B cell (primary cell): ENCODE measurements at regions of chr17 and their contacts with region 1.

Region 1: DNA sequence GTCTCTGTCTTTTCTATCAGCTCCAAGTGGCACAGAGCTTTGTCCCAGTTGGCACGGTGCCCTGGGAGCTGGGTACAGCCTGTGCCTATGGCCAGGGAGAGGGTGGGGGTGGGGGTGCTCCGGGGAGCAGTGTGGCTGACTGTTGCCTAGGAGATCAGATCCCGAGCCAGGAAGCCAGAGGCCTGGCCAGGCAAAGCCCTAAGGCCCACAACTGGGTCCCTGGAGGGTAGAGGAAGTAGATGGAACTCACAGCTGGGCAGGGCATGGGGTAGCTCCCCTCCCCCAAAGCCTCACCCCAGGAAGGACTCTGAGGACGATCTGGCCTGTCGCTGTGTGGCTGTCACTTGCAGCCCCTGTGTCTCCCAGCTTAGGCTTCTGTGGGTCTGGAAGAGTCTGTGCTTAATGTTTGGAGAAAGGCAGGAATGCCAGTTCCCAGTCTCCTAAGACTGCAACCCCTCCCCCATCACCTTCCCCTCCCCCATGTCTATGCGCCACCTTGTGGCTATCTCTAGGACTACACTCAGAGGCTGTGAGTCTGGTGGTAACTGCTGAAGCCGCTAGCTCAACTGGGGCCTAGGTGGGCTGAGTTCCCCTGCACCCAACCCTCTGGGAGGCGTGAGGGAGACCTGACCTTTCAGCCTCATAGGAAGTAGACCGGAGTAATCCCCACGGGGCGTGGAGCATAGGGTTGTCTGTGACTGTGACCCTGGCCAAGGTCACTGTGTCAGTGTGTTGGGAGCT is 12.6 kb downstream of the THRA start:
- DNase-seq: peak; percentile 82
- ATAC-seq: peak; percentile 93
- H3K4me3 ChIP-seq: no peak overlapping the region
- H3K4me3 Mint-ChIP-seq: no peak overlapping the region
- H3K27ac ChIP-seq: no peak overlapping the region
- H3K27ac Mint-ChIP-seq: peak overlapping the region; percentile 46
- H3K4me1 ChIP-seq: peaks cover 28 to 31% of the 10 kb centered on the region in 2 donors
- H3K4me1 Mint-ChIP-seq: peaks cover 40% of the 10 kb centered on the region
- H3K27me3 ChIP-seq: no peaks in the 10 kb centered on the region
- H3K27me3 Mint-ChIP-seq: no peaks in the 10 kb centered on the region
- CTCF ChIP-seq: peak; percentile 88

Region 2: DNA sequence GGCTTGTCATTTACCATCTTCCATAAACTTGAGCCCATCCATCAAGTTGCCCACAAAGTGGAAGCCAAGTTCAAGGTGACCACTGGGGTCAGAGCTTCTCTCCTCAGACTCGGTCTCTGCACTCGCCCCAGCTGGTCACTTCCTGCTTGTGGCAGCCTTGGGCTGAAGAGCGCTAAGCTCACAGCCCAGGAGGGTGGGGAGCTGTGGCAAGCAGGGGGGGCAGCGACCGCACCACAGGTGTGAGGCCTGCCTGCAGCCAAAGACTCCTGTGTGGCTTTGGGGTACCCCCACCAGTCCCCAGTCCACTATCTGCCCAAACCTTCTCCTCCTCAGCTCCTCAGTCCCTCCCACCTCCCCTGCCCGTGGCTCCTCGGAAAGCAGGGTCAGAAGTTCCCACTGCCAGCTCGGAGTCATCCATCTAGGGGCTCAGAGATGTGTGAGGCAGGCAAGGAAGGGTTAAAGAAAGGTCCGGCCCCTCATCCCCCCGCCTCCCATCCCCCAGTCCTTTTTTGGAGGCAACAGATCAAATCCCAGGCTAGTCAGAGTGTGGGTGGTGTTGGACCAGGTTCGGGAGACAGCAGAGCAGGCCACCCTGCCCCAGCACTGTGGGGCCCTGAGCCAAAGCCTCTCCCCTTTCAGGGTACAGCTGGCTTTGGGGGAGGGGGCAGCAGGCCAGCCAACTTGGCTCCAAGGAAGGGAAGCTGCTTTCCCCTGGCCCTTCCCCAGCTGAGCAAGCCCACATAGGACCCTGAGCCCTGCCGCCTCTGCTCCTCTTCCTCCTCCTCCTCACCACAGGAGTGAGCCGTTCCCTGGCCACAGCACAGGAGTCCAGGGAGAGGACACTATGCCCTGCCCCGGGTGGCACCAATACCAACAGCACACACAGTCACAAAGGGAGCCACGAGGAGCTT is 56.9 kb before region 1 on chr17:
- CTCF ChIA-PET with region 1: interaction called, 14 read pairs
- POLR2A ChIA-PET with region 1: no interaction called
- intact Hi-C with region 1: no loop called
- DNase-seq: no peak
- ATAC-seq: no peak
- H3K4me3 ChIP-seq: no peak overlapping the region
- H3K4me3 Mint-ChIP-seq: no peak overlapping the region
- H3K27ac ChIP-seq: no peak overlapping the region
- H3K27ac Mint-ChIP-seq: no peak overlapping the region
- H3K4me1 ChIP-seq: peaks cover 0 to 3% of the 10 kb centered on the region in 2 donors
- H3K4me1 Mint-ChIP-seq: no peaks in the 10 kb centered on the region
- H3K27me3 ChIP-seq: no peaks in the 10 kb centered on the region
- H3K27me3 Mint-ChIP-seq: no peaks in the 10 kb centered on the region
- CTCF ChIP-seq: no peak

Region 3: GRCh38 chr17:40062329-40063186 is 12.8 kb before region 1 on chr17 and contains the start of gene THRA:
- CTCF ChIA-PET with region 1: interaction called, 115 read pairs
- POLR2A ChIA-PET with region 1: interaction called, 11 read pairs
- intact Hi-C with region 1: loop called (anchors 1 kb)
- DNase-seq: peak; percentile 85
- ATAC-seq: peak; percentile 92
- H3K4me3 ChIP-seq: peak within 1 kb of the TSS; percentile 53 to 96 (median 95)
- H3K4me3 Mint-ChIP-seq: peak within 1 kb of the TSS; percentile 91
- H3K27ac ChIP-seq: peak within 1 kb of the TSS; percentile 59 to 67
- H3K27ac Mint-ChIP-seq: peak within 1 kb of the TSS; percentile 93
- H3K4me1 ChIP-seq: peaks cover 17 to 23% of the 10 kb centered on the region in 2 donors
- H3K4me1 Mint-ChIP-seq: peaks cover 39% of the 10 kb centered on the region
- H3K27me3 ChIP-seq: peaks cover 0 to 6% (median 1%) of the 10 kb centered on the region in 4 experiments
- H3K27me3 Mint-ChIP-seq: peaks cover 6% of the 10 kb centered on the region
- CTCF ChIP-seq: no peak
- total RNA-seq, gene THRA: 16.8 and 17.1 TPM in 2 replicates

Region 4: DNA sequence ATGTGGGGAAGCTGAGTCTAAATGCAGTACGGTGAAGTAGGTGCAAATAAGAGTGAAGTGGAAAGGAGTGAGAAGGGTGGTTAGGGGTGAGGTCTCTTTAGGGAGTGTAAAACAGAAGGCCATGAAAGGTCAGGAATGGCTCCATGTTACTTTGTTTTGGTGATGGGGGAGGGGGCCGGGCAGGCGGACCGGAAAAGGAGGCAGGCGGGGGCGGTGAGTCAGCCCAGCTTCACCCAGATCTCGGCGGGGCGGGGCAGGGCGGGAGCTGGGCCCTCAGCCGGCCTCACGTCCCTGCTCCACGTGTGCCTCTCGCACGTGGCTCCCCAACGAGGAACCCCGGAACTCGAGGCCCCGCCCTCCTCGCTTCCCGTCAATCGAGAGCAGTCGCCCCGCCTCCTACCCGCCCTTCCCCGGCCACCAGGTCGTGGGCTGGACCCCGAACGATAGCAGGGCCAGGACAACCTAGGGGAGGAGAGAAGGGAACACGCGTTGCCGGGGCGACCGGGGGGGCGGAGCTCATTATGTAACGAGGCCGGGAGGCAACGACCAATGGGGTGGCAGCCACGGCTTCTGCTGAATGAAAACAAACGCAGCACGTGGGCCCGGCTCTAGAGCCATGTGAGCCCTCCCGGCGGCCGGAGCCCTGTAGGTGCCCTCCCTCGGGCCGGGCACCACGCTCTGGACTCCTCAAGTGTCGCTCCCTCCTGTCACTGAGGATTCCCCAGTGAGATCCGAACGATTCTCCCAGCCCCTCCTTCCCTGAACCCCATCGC is 23.7 kb after region 1 on chr17:
- CTCF ChIA-PET with region 1: interaction called, 37 read pairs
- POLR2A ChIA-PET with region 1: interaction called, 4 read pairs
- intact Hi-C with region 1: loop called (anchors 1 kb)
- DNase-seq: peak; percentile 98
- ATAC-seq: peak; percentile 64
- H3K4me3 ChIP-seq: peak overlapping the region; percentile 51 to 91 (median 78)
- H3K4me3 Mint-ChIP-seq: peak overlapping the region; percentile 77
- H3K27ac ChIP-seq: peak overlapping the region; percentile 92 to 93
- H3K27ac Mint-ChIP-seq: peak overlapping the region; percentile 89
- H3K4me1 ChIP-seq: peaks cover 53 to 70% of the 10 kb centered on the region in 2 donors
- H3K4me1 Mint-ChIP-seq: peaks cover 74% of the 10 kb centered on the region
- H3K27me3 ChIP-seq: no peaks in the 10 kb centered on the region
- H3K27me3 Mint-ChIP-seq: no peaks in the 10 kb centered on the region
- CTCF ChIP-seq: no peak

Region 5: GRCh38 chr17:40139566-40140058 is 64.2 kb after region 1 on chr17:
- CTCF ChIA-PET with region 1: interaction called, 12 read pairs
- POLR2A ChIA-PET with region 1: interaction called, 11 read pairs
- intact Hi-C with region 1: no loop called
- DNase-seq: no peak
- ATAC-seq: peak; percentile 1
- H3K4me3 ChIP-seq: peak overlapping the region; percentile 74 to 93 (median 84)
- H3K4me3 Mint-ChIP-seq: peak overlapping the region; percentile 94
- H3K27ac ChIP-seq: peak overlapping the region; percentile 94 to 95
- H3K27ac Mint-ChIP-seq: peak overlapping the region; percentile 98
- H3K4me1 ChIP-seq: peaks cover 19 to 24% of the 10 kb centered on the region in 2 donors
- H3K4me1 Mint-ChIP-seq: peaks cover 23% of the 10 kb centered on the region
- H3K27me3 ChIP-seq: no peaks in the 10 kb centered on the region
- H3K27me3 Mint-ChIP-seq: no peaks in the 10 kb centered on the region
- CTCF ChIP-seq: no peak

Region 6: GRCh38 chr17:40510328-40510648 is 434.9 kb after region 1 on chr17:
- CTCF ChIA-PET with region 1: no interaction called
- POLR2A ChIA-PET with region 1: no interaction called
- intact Hi-C with region 1: no loop called
- DNase-seq: no peak
- ATAC-seq: no peak
- H3K4me3 ChIP-seq: no peak overlapping the region
- H3K4me3 Mint-ChIP-seq: no peak overlapping the region
- H3K27ac ChIP-seq: no peak overlapping the region
- H3K27ac Mint-ChIP-seq: no peak overlapping the region
- H3K4me1 ChIP-seq: peaks cover 8 to 11% of the 10 kb centered on the region in 2 donors
- H3K4me1 Mint-ChIP-seq: peaks cover 25% of the 10 kb centered on the region
- H3K27me3 ChIP-seq: no peaks in the 10 kb centered on the region
- H3K27me3 Mint-ChIP-seq: peaks cover 4% of the 10 kb centered on the region
- CTCF ChIP-seq: no peak